Activated CD4-positive, alpha-beta memory T cell treated with anti-CD3 and anti-CD28 coated beads for 36 hours (primary cell): ENCODE measurements at regions of chr6 and their contacts with region 1.

Region 1: DNA sequence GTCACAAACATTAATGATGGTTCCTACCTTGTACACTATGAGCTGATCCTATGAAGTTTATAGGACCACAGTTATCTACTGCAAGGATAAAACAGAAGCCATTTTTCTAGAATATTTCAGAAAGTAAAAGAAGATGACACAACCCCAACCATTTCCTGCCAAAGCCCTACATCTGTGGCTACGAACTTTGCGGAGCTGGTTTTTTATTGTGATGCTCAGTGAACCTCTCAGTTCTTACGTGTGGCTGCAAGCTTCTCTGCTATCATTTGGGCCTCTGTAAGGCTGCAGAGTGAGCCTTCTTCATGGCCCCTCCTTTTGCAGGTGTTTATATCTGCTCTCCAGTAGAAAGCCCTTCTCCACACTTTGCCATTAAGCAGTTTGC is 17.8 kb upstream of the TAGAP start:
- DNase-seq: peak; percentile 76
- H3K4me3 Mint-ChIP-seq: peak overlapping the region; percentile 53
- H3K27ac Mint-ChIP-seq: peak overlapping the region; percentile 93
- H3K4me1 Mint-ChIP-seq: peaks cover 99% of the 10 kb centered on the region
- H3K27me3 Mint-ChIP-seq: no peaks in the 10 kb centered on the region

Region 2: GRCh38 chr6:158631678-158632537 is 430.6 kb before region 1 on chr6:
- CTCF ChIA-PET with region 1: no interaction called
- POLR2A ChIA-PET with region 1: no interaction called
- intact Hi-C with region 1: no loop called
- DNase-seq: no peak
- H3K4me3 Mint-ChIP-seq: no peak overlapping the region
- H3K27ac Mint-ChIP-seq: peak overlapping the region; percentile 81
- H3K4me1 Mint-ChIP-seq: peaks cover 56% of the 10 kb centered on the region
- H3K27me3 Mint-ChIP-seq: no peaks in the 10 kb centered on the region

Region 3: DNA sequence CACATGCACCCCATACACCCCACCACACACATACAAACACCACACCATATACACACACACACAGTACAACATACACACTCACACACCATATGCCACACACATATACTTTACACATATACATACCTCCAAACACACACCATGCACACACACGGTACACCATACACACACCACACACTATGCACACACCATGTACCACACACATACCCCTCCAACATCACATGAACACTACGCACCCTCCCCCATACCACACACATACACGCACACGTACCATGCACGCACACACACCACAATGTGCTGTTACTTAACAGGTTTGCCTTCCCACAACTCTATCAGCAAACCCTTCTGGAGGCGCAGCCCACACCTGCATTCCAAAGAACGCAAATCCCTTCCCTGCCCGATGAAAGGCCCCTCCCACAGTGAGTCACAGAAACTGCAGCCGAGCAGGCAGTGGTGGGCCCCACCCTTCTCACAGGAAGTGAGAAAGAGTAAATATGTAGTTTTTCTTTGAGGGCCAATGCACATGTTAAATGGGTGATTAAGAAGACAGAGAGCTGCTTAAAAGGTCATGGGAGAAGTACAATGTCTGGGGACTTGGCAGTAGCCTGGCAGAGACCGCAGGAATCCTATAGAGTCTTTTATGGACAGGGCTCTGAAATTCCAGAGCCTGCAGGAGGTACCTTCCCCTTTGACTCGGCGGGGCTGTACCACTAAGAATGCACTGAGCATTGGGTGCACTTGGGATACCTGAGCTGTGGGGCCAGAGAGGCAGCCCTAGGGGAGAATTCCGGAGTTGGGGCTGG is 209.3 kb before region 1 on chr6:
- CTCF ChIA-PET with region 1: no interaction called
- POLR2A ChIA-PET with region 1: no interaction called
- intact Hi-C with region 1: loop called (anchors 5 kb)
- DNase-seq: peak; percentile 94
- H3K4me3 Mint-ChIP-seq: no peak overlapping the region
- H3K27ac Mint-ChIP-seq: no peak overlapping the region
- H3K4me1 Mint-ChIP-seq: peaks cover 28% of the 10 kb centered on the region
- H3K27me3 Mint-ChIP-seq: no peaks in the 10 kb centered on the region

Region 4: GRCh38 chr6:159008656-159009288 is 53.8 kb before region 1 on chr6:
- CTCF ChIA-PET with region 1: interaction called, 11 read pairs
- POLR2A ChIA-PET with region 1: no interaction called
- intact Hi-C with region 1: no loop called
- DNase-seq: peak; percentile 23
- H3K4me3 Mint-ChIP-seq: peak overlapping the region; percentile 42
- H3K27ac Mint-ChIP-seq: peak overlapping the region; percentile 14
- H3K4me1 Mint-ChIP-seq: peaks cover 35% of the 10 kb centered on the region
- H3K27me3 Mint-ChIP-seq: no peaks in the 10 kb centered on the region

Region 5: GRCh38 chr6:159092631-159093030 is 30.1 kb after region 1 on chr6:
- CTCF ChIA-PET with region 1: interaction called, 3 read pairs
- POLR2A ChIA-PET with region 1: interaction called, 5 read pairs
- intact Hi-C with region 1: loop called (anchors 1 kb)
- DNase-seq: no peak
- H3K4me3 Mint-ChIP-seq: no peak overlapping the region
- H3K27ac Mint-ChIP-seq: no peak overlapping the region
- H3K4me1 Mint-ChIP-seq: peaks cover 66% of the 10 kb centered on the region
- H3K27me3 Mint-ChIP-seq: no peaks in the 10 kb centered on the region

Region 6: DNA sequence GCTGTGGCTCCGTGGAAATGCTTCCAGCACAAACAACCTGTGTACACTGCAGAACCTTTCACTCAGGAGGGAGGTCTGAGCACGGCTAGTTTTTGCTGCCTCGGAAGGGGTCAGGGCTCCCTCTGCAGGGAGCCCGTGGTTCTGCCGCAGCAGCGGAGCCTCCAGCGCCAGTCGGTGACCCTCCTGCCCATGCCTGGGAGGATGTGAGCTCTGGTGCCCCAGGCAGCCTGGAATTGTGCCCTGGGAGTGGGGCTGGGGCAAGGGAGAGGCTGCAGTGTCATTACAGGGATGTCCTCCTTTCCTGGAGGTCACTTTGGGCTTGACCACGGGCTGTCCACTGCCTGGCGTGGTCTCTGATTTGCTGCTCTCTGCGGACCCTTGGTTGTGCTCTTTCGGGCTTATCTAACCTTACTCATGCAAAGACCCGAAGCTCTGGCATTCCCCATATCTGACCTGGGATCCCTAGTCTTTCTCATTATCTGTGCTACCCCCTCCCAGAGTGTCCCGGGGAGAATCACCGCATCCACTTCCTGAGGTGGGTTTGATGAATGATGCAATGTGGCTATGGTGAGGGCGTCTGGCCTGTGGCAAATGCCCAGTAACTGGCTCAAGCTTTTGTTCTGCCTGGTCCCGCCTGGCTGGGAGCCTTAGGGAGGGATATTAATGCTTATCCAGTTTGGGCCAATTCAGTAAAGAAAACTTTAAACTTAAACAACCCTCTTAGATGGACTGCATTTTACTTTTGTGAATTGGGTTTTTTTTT is 41.8 kb after region 1 on chr6:
- CTCF ChIA-PET with region 1: interaction called, 13 read pairs
- POLR2A ChIA-PET with region 1: interaction called, 7 read pairs
- intact Hi-C with region 1: no loop called
- DNase-seq: peak; percentile 88
- H3K4me3 Mint-ChIP-seq: peak overlapping the region; percentile 54
- H3K27ac Mint-ChIP-seq: peak overlapping the region; percentile 40
- H3K4me1 Mint-ChIP-seq: peaks cover 75% of the 10 kb centered on the region
- H3K27me3 Mint-ChIP-seq: no peaks in the 10 kb centered on the region

Region 7: GRCh38 chr6:159169193-159169555 is 106.6 kb after region 1 on chr6 and contains the start of gene FNDC1:
- CTCF ChIA-PET with region 1: no interaction called
- POLR2A ChIA-PET with region 1: no interaction called
- intact Hi-C with region 1: no loop called
- DNase-seq: peak; percentile 71
- H3K4me3 Mint-ChIP-seq: peak within 1 kb of the TSS; percentile 61
- H3K27ac Mint-ChIP-seq: no peak within 1 kb of the TSS
- H3K4me1 Mint-ChIP-seq: peaks cover 15% of the 10 kb centered on the region
- H3K27me3 Mint-ChIP-seq: peaks cover 73% of the 10 kb centered on the region
- total RNA-seq, gene FNDC1: not detected

Region 8: GRCh38 chr6:159582736-159583135 is 520.2 kb after region 1 on chr6:
- CTCF ChIA-PET with region 1: no interaction called
- POLR2A ChIA-PET with region 1: no interaction called
- intact Hi-C with region 1: no loop called
- DNase-seq: no peak
- H3K4me3 Mint-ChIP-seq: no peak overlapping the region
- H3K27ac Mint-ChIP-seq: no peak overlapping the region
- H3K4me1 Mint-ChIP-seq: no peaks in the 10 kb centered on the region
- H3K27me3 Mint-ChIP-seq: peaks cover 5% of the 10 kb centered on the region